Aorta (tissue), 5 donors: ENCODE measurements at regions of chr13 and their contacts with region 1.

Region 1: DNA sequence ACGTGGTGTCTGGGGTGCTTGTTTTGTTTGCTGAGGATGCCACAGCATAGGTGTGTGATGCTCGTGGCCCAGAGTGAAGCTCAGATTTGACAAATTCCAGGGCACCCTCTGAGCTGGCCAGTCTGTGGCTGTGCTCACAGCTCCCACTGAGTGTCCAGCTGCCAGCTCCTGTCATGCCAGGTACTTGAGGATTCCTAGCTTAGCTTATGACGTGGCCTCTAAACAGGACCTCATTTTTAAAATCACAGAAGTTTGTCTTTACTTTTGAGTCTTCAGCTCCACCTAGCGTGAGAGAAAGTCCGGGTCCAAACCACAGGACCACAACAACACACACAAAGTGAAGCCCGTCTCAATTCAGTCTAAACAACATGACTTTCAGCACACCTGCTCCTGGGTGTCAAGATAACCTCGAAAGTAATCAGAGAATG is 117.3 kb downstream of the RAB20 start:
- DNase-seq: no peak
- ATAC-seq: peak; percentile 62
- H3K4me3 ChIP-seq: no peak overlapping the region
- H3K27ac ChIP-seq: peak overlapping the region in 1 of 2 donors; percentile 82
- H3K4me1 ChIP-seq: no peaks in the 10 kb centered on the region
- H3K27me3 ChIP-seq: no peaks in the 10 kb centered on the region

Region 2: DNA sequence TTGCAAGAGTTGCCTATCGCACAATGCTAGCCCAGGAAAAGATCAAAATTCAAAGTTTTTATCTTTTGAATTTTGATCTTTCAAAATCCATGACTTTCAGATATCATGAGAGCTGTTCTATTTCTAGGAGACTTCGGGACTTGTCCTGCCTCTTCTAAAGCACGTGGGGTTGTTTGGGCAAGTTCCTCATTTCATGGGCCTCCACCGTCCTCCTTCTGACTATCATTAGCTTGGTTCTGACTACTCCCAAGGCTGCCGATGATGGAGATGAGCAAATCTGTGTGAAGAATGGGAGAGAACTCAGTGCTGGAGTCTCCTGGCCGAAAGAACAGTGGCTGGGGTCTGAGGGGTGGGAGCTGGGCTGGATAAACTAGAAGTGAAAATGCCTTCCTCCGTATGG is 223.8 kb before region 1 on chr13:
- intact Hi-C with region 1: loop called (anchors 5 kb)
- DNase-seq: no peak
- ATAC-seq: no peak
- H3K4me3 ChIP-seq: no peak overlapping the region
- H3K27ac ChIP-seq: peak overlapping the region in 1 of 2 donors; percentile 61
- H3K4me1 ChIP-seq: peaks cover 4 to 7% of the 10 kb centered on the region in 2 donors
- H3K27me3 ChIP-seq: no peaks in the 10 kb centered on the region